ENCODE measurements at regions of chr16 and their contacts with region 1.

Region 1: GRCh38 chr16:23877107-23878090 is 41.6 kb downstream of the PRKCB start:
- DNase-seq: peak in 8 of 14 experiments; percentile 9 to 47 (median 22)
- ATAC-seq: peak; percentile 44
- H3K4me3 ChIP-seq: no peak overlapping the region
- H3K4me3 Mint-ChIP-seq: no peak overlapping the region
- H3K27ac ChIP-seq: no peak overlapping the region
- H3K27ac Mint-ChIP-seq: peak overlapping the region; percentile 49
- H3K4me1 ChIP-seq: peaks cover 26% of the 10 kb centered on the region
- H3K4me1 Mint-ChIP-seq: peaks cover 77% of the 10 kb centered on the region
- H3K27me3 ChIP-seq: no peaks in the 10 kb centered on the region
- H3K27me3 Mint-ChIP-seq: no peaks in the 10 kb centered on the region
- CTCF ChIP-seq: peak; percentile 41

Region 2: DNA sequence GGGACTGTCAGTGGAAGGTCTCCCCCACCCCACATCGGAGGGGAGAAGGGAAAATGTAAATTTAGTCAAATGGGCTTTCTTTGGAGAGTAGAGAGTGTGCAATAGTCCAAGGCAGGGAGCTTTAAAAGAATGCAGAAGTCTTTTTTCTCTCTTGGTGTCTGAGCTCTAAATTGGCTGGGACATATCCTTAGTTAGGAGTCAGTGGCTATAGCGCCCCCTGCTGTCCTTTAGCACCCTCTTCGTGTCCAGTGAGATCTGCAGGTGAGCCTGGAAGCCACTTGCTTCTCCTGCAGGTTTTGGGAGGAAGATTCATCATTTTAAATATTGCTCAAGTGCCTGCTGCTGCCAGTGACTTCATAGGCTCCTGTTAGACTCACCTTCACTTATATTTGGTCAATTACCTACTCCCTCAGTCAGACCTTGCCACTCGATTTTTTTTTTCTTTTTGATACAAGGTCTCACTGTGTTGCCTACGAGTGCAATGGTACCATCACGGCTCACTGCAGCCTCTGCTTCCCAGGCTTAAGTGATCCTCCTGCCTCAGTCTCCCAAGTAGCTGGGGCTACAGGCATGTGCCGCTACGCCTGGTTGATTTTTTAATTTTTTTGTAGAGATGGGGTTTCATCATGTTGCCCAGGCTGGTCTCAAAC is 133.2 kb after region 1 on chr16:
- CTCF ChIA-PET with region 1: interaction called, 13 read pairs
- POLR2A ChIA-PET with region 1: interaction called, 17 read pairs
- intact Hi-C with region 1: loop called (anchors 1 kb)
- DNase-seq: peak; percentile 66 to 91 (median 78)
- ATAC-seq: peak; percentile 30
- H3K4me3 ChIP-seq: no peak overlapping the region
- H3K4me3 Mint-ChIP-seq: no peak overlapping the region
- H3K27ac ChIP-seq: no peak overlapping the region
- H3K27ac Mint-ChIP-seq: peak overlapping the region; percentile 67
- H3K4me1 ChIP-seq: peaks cover 43% of the 10 kb centered on the region
- H3K4me1 Mint-ChIP-seq: peaks cover 57% of the 10 kb centered on the region
- H3K27me3 ChIP-seq: no peaks in the 10 kb centered on the region
- H3K27me3 Mint-ChIP-seq: no peaks in the 10 kb centered on the region
- CTCF ChIP-seq: peak; percentile 84

Region 3: GRCh38 chr16:24041826-24042631 is 164.6 kb after region 1 on chr16:
- CTCF ChIA-PET with region 1: no interaction called
- POLR2A ChIA-PET with region 1: no interaction called
- intact Hi-C with region 1: loop called in 1 of 2 experiments (anchors 2 kb)
- DNase-seq: peak; percentile 50 to 82 (median 68)
- ATAC-seq: peak; percentile 78
- H3K4me3 ChIP-seq: no peak overlapping the region
- H3K4me3 Mint-ChIP-seq: no peak overlapping the region
- H3K27ac ChIP-seq: no peak overlapping the region
- H3K27ac Mint-ChIP-seq: no peak overlapping the region
- H3K4me1 ChIP-seq: no peaks in the 10 kb centered on the region
- H3K4me1 Mint-ChIP-seq: peaks cover 8% of the 10 kb centered on the region
- H3K27me3 ChIP-seq: no peaks in the 10 kb centered on the region
- H3K27me3 Mint-ChIP-seq: no peaks in the 10 kb centered on the region
- CTCF ChIP-seq: peak; percentile 71